ENCODE measurements at regions of chr6 and their contacts with region 1.

Region 1: GRCh38 chr6:107731422-107732319 is 92.4 kb downstream of the SCML4 start:
- DNase-seq: peak in 7 of 9 donors; percentile 45 to 64 (median 58)
- ATAC-seq: peak; percentile 53
- H3K4me3 ChIP-seq: peak overlapping the region; percentile 68
- H3K4me3 Mint-ChIP-seq: peak overlapping the region; percentile 85 to 99 (median 97)
- H3K27ac ChIP-seq: peak overlapping the region; percentile 77
- H3K27ac Mint-ChIP-seq: peak overlapping the region; percentile 77 to 98 (median 95)
- H3K4me1 ChIP-seq: peaks cover 55 to 65% of the 10 kb centered on the region in 2 donors
- H3K4me1 Mint-ChIP-seq: peaks cover 56 to 86% (median 76%) of the 10 kb centered on the region in 7 donors
- H3K27me3 ChIP-seq: no peaks in the 10 kb centered on the region
- H3K27me3 Mint-ChIP-seq: peaks cover 0 to 13% (median 0%) of the 10 kb centered on the region in 5 donors

Region 2: GRCh38 chr6:107594736-107595135 is 136.9 kb before region 1 on chr6:
- CTCF ChIA-PET with region 1: no interaction called
- POLR2A ChIA-PET with region 1: no interaction called
- intact Hi-C with region 1: no loop called
- DNase-seq: no peak
- ATAC-seq: no peak
- H3K4me3 ChIP-seq: no peak overlapping the region
- H3K4me3 Mint-ChIP-seq: no peak overlapping the region
- H3K27ac ChIP-seq: no peak overlapping the region
- H3K27ac Mint-ChIP-seq: no peak overlapping the region
- H3K4me1 ChIP-seq: no peaks in the 10 kb centered on the region
- H3K4me1 Mint-ChIP-seq: no peaks in the 10 kb centered on the region
- H3K27me3 ChIP-seq: no peaks in the 10 kb centered on the region
- H3K27me3 Mint-ChIP-seq: peaks cover 16 to 68% (median 26%) of the 10 kb centered on the region in 5 donors

Region 3: GRCh38 chr6:107753778-107754177 is 22.1 kb after region 1 on chr6:
- CTCF ChIA-PET with region 1: interaction called, 15 read pairs
- POLR2A ChIA-PET with region 1: interaction called, 6 read pairs
- intact Hi-C with region 1: loop called in 1 of 2 experiments (anchors 2 kb)
- DNase-seq: peak in 2 of 9 donors; percentile 6 to 12
- ATAC-seq: no peak
- H3K4me3 ChIP-seq: no peak overlapping the region
- H3K4me3 Mint-ChIP-seq: peak overlapping the region; percentile 3 to 76 (median 57)
- H3K27ac ChIP-seq: no peak overlapping the region
- H3K27ac Mint-ChIP-seq: peak overlapping the region in 8 of 9 donors; percentile 66 to 90 (median 84)
- H3K4me1 ChIP-seq: peaks cover 21 to 25% of the 10 kb centered on the region in 2 donors
- H3K4me1 Mint-ChIP-seq: peaks cover 33 to 93% (median 84%) of the 10 kb centered on the region in 7 donors
- H3K27me3 ChIP-seq: no peaks in the 10 kb centered on the region
- H3K27me3 Mint-ChIP-seq: no peaks in the 10 kb centered on the region

Region 4: DNA sequence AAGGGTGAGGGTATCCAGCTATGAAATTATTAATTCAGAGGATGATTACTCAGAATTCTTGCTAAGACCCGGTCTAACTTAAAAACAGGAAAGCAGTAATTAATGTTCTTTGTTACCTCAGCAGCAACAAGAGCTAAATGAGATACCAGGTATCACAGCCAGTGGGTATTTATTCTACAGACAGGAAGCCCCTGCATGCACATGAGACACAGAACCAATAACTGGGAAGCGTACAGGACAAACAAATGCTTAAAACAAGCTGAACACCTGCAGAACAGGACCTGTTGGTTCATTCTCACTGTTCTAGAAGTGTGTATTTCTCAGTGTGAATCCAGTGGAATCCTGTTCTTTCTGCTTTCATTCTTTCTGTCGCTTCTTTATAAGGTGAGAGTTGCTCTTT is 61.5 kb after region 1 on chr6:
- CTCF ChIA-PET with region 1: interaction called, 28 read pairs
- POLR2A ChIA-PET with region 1: interaction called, 140 read pairs
- intact Hi-C with region 1: no loop called
- DNase-seq: peak in 6 of 9 donors; percentile 21 to 51 (median 39)
- ATAC-seq: peak; percentile 51
- H3K4me3 ChIP-seq: no peak overlapping the region
- H3K4me3 Mint-ChIP-seq: peak overlapping the region in 9 of 10 donors; percentile 19 to 80 (median 55)
- H3K27ac ChIP-seq: peak overlapping the region; percentile 66
- H3K27ac Mint-ChIP-seq: peak overlapping the region in 8 of 9 donors; percentile 52 to 97 (median 92)
- H3K4me1 ChIP-seq: peaks cover 19 to 54% of the 10 kb centered on the region in 2 donors
- H3K4me1 Mint-ChIP-seq: peaks cover 37 to 96% (median 93%) of the 10 kb centered on the region in 7 donors
- H3K27me3 ChIP-seq: no peaks in the 10 kb centered on the region
- H3K27me3 Mint-ChIP-seq: peaks cover 0 to 7% (median 0%) of the 10 kb centered on the region in 5 donors

Region 5: GRCh38 chr6:107806691-107807090 is 75.0 kb after region 1 on chr6:
- CTCF ChIA-PET with region 1: interaction called, 6 read pairs
- POLR2A ChIA-PET with region 1: interaction called, 10 read pairs
- intact Hi-C with region 1: no loop called
- DNase-seq: no peak
- ATAC-seq: no peak
- H3K4me3 ChIP-seq: no peak overlapping the region
- H3K4me3 Mint-ChIP-seq: peak overlapping the region in 1 of 10 donors; percentile 50
- H3K27ac ChIP-seq: peak overlapping the region; percentile 10
- H3K27ac Mint-ChIP-seq: peak overlapping the region in 6 of 9 donors; percentile 14 to 91 (median 79)
- H3K4me1 ChIP-seq: peaks cover 12 to 42% of the 10 kb centered on the region in 2 donors
- H3K4me1 Mint-ChIP-seq: peaks cover 27 to 90% (median 83%) of the 10 kb centered on the region in 7 donors
- H3K27me3 ChIP-seq: no peaks in the 10 kb centered on the region
- H3K27me3 Mint-ChIP-seq: no peaks in the 10 kb centered on the region

Region 6: GRCh38 chr6:108771421-108771820 is 1039.8 kb after region 1 on chr6:
- CTCF ChIA-PET with region 1: no interaction called
- POLR2A ChIA-PET with region 1: no interaction called
- intact Hi-C with region 1: no loop called
- DNase-seq: no peak
- ATAC-seq: no peak
- H3K4me3 ChIP-seq: no peak overlapping the region
- H3K4me3 Mint-ChIP-seq: no peak overlapping the region
- H3K27ac ChIP-seq: no peak overlapping the region
- H3K27ac Mint-ChIP-seq: no peak overlapping the region
- H3K4me1 ChIP-seq: no peaks in the 10 kb centered on the region
- H3K4me1 Mint-ChIP-seq: peaks cover 0 to 6% (median 5%) of the 10 kb centered on the region in 7 donors
- H3K27me3 ChIP-seq: no peaks in the 10 kb centered on the region
- H3K27me3 Mint-ChIP-seq: peaks cover 0 to 13% (median 5%) of the 10 kb centered on the region in 5 donors